Activated T-helper 1 cell treated with anti-CD3 and anti-CD28 coated beads, Interleukin-12 subunit alpha, Interleukin-12 subunit beta, Interleukin-2, Interleukin-4 antibody, amounts not matched to agents 30 ng/mL and 10 ng/mL and 1 ng/mL, durations not matched to agents 14 hours and 24 hours and 36 hours (primary cell): ENCODE measurements at regions of chr12 and their contacts with region 1.

Region 1: GRCh38 chr12:121240484-121241101 is 30.7 kb downstream of the P2RX4 start:
- DNase-seq: peak; percentile 79
- H3K4me3 Mint-ChIP-seq: peak overlapping the region; percentile 73
- H3K27ac Mint-ChIP-seq: peak overlapping the region; percentile 92
- H3K4me1 Mint-ChIP-seq: peaks cover 30% of the 10 kb centered on the region
- H3K27me3 Mint-ChIP-seq: no peaks in the 10 kb centered on the region

Region 2: GRCh38 chr12:121223292-121224285 is 17.0 kb before region 1 on chr12:
- intact Hi-C with region 1: loop called (anchors 2 kb)
- DNase-seq: peak; percentile 36
- H3K4me3 Mint-ChIP-seq: peak overlapping the region; percentile 37
- H3K27ac Mint-ChIP-seq: peak overlapping the region; percentile 89
- H3K4me1 Mint-ChIP-seq: peaks cover 44% of the 10 kb centered on the region
- H3K27me3 Mint-ChIP-seq: no peaks in the 10 kb centered on the region

Region 3: DNA sequence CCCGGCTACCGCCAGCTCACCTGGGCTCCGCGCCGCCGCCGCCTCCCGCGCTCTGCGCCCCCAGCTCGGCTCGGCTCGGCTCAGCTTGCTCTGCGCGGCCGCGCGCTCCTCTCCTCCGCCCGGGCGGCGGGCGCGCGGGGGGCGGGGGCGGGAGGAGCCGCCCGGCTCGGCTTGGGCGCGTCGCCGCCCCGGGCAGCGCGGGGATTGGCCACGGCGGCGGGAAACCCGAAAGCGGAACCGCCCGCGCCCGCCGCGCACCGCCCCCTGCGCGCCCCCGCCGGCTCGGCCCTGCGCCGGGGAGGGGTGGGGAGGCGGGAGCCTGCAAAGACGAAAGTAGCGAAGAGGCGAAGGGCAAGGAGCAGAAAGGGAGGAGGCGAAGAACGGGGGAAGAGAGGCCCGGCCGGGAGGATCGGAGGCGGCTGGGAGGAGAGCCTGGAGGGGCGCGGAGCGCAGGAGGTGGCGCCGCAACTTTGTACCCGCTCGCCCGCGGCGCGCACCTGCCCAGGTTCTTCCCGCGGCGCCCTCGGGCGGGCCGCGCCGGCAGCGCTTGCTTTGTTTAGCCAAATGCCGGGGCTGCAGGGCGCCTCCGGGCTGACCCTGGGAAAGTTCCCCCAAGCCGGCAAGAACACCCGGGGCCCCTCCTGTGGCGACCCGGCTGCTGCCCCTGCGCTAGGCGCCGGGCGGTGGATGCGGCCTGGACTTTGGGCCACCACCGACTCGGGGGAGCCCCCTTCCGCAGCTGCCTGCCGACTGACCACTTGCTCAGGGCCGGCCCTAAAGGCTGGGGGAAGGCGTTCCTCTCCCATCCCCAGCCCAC is 56.2 kb after region 1 on chr12 and contains the start of gene CAMKK2:
- intact Hi-C with region 1: loop called (anchors 5 kb)
- DNase-seq: peak; percentile 91
- H3K4me3 Mint-ChIP-seq: peak within 1 kb of the TSS; percentile 94
- H3K27ac Mint-ChIP-seq: peak within 1 kb of the TSS; percentile 88
- H3K4me1 Mint-ChIP-seq: peaks cover 35% of the 10 kb centered on the region
- H3K27me3 Mint-ChIP-seq: no peaks in the 10 kb centered on the region
- total RNA-seq, gene CAMKK2: 38.1 and 41.0 TPM in 2 replicates

Region 4: DNA sequence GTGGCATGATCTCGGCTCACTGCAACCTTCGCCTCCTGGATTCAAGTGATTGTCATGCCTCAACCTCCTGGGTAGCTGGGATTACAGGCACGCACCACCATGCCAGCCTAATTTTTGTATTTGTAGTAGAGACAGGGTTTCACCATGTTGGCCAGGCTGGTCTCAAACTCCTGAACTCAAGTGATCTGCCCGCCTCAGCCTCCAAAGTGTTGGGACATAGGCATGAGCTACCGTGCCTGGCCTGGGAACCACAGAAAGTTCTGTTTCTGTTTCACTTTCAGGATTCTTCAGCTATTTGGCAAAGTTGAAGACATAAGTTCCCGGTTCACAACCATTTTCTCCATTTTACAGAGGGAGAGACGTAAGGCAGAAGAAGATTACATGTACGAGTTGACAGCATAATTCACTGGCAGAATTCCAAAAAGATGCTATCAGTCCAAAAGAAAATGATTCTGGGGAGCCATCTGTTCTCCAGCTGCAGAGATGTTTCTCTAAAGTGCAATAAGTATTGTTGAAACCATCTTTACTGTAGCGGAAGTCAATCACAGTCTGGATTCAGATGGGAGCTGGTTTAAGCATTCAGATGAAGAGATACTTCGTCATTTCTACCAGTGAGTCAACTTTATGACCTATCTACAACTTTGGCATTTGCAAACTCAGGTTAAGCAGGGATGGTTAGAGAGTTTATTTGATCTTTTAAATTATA is 151.2 kb after region 1 on chr12:
- intact Hi-C with region 1: no loop called
- DNase-seq: peak; percentile 31
- H3K4me3 Mint-ChIP-seq: peak overlapping the region; percentile 2
- H3K27ac Mint-ChIP-seq: peak overlapping the region; percentile 21
- H3K4me1 Mint-ChIP-seq: peaks cover 20% of the 10 kb centered on the region
- H3K27me3 Mint-ChIP-seq: no peaks in the 10 kb centered on the region